ENCODE measurements at regions of chr1 and their contacts with region 1.

Region 1: GRCh38 chr1:199113265-199113869 is 474.5 kb downstream of the PTPRC start:
- ATAC-seq: peak in 4 of 8 experiments; percentile 68 to 93 (median 84)
- H3K4me3 ChIP-seq: no peak overlapping the region
- H3K27ac ChIP-seq: no peak overlapping the region
- H3K4me1 ChIP-seq: no peaks in the 10 kb centered on the region

Region 2: DNA sequence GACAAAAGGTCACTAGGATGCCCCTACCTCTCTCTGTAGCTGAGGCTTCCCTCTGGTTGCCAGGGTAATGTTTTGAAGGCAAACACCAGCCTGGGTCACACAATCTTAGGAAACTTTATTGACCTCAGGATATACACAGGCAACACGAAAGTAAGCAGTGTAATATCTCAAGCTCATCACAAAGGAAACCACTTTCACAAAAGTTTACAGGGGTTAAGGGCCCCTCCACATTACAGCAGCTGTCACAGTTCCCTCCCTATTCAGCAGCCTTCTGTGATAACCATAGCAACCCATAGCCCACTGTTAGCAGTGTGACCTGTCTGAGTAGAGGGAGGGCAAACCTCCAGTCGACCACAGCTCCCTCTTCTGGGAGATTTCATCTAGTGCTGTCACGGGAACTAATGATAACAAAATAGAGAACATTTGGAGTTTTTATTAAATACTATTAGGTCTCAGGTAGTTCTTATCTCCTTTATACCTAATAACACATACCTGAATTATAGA is 324.8 kb before region 1 on chr1:
- in situ Hi-C with region 1: loop called in 1 of 9 experiments (anchors 25 kb)
- ATAC-seq: peak in 6 of 8 experiments; percentile 35 to 100 (median 100)
- H3K4me3 ChIP-seq: no peak overlapping the region
- H3K27ac ChIP-seq: peak overlapping the region; percentile 31 to 35
- H3K4me1 ChIP-seq: peaks cover 18 to 19% of the 10 kb centered on the region in 2 donors

Measured in motor neuron (in vitro differentiated cells).